Dorsolateral prefrontal cortex (tissue), 120 donors: ENCODE measurements at regions of chr4 and their contacts with region 1.

Region 1: GRCh38 chr4:110484740-110485139 is 8.8 kb downstream of the ENPEP start:
- DNase-seq: no peak
- H3K4me3 ChIP-seq: no peak overlapping the region
- H3K27ac ChIP-seq: no peak overlapping the region
- H3K27me3 ChIP-seq: peaks cover 0 to 4% (median 0%) of the 10 kb centered on the region in 45 donors
- CTCF ChIP-seq: no peak

Region 2: DNA sequence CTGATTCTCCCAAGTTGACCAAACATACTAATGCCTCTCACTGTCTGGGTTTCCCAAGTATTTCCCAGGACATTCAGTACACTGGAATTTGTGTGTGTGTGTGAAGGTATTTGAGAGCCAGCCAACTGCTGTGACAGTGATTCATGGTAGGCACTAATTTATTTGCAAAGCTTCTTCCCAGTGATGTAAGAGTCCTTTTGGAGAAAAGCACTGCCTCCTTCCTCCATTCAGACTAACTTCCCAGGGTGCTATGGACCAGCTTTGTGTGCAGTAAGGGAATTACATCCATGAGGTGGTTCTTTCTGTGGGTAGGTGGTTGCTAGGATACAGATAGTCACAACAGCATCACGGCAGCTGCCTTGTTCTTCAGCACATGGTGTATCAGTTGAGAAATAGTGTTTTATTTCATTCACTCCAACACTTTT is 563.3 kb before region 1 on chr4:
- intact Hi-C with region 1: no loop called
- DNase-seq: peak in 1 of 10 donors; percentile 27
- H3K4me3 ChIP-seq: no peak overlapping the region
- H3K27ac ChIP-seq: no peak overlapping the region
- H3K27me3 ChIP-seq: no peaks in the 10 kb centered on the region
- CTCF ChIP-seq: no peak

Region 3: DNA sequence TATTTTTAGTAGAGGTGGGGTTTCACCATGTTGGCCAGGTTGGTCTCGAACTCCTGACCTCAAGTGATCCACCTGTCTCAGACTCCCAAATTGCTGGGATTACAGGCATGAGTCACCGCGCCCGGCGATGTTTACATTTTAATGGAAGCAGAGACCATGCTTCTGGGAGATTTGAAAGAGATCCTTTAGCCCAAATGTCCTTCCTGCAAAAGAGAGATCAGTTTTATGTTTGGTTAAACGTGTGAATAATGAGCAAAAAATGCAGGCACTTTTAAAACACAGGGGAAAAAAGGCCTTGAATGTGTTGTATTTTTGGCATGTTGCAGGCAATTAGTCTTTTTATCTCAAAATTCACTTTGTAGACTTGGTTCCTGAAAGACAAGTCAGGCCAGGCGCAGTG is 190.6 kb before region 1 on chr4:
- intact Hi-C with region 1: loop called in 1 of 2 experiments (anchors 5 kb)
- DNase-seq: no peak
- H3K4me3 ChIP-seq: no peak overlapping the region
- H3K27ac ChIP-seq: no peak overlapping the region
- H3K27me3 ChIP-seq: no peaks in the 10 kb centered on the region
- CTCF ChIP-seq: no peak